Natural killer cell (primary cell): ENCODE measurements at regions of chr3 and their contacts with region 1.

Region 1: GRCh38 chr3:59957150-59957549 is 907.3 kb upstream of the CFAP20DC start:
- DNase-seq: peak in 1 of 2 donors; percentile 16
- ATAC-seq: peak; percentile 74 to 98 (median 86)
- H3K4me3 ChIP-seq: no peak overlapping the region
- H3K4me3 Mint-ChIP-seq: peak overlapping the region; percentile 71
- H3K27ac ChIP-seq: peak overlapping the region; percentile 34
- H3K27ac Mint-ChIP-seq: peak overlapping the region; percentile 79 to 82
- H3K4me1 ChIP-seq: peaks cover 9% of the 10 kb centered on the region
- H3K4me1 Mint-ChIP-seq: peaks cover 31 to 51% of the 10 kb centered on the region in 2 donors
- H3K27me3 ChIP-seq: no peaks in the 10 kb centered on the region
- H3K27me3 Mint-ChIP-seq: peaks cover 0 to 7% of the 10 kb centered on the region in 2 donors
- CTCF ChIP-seq: no peak

Region 2: DNA sequence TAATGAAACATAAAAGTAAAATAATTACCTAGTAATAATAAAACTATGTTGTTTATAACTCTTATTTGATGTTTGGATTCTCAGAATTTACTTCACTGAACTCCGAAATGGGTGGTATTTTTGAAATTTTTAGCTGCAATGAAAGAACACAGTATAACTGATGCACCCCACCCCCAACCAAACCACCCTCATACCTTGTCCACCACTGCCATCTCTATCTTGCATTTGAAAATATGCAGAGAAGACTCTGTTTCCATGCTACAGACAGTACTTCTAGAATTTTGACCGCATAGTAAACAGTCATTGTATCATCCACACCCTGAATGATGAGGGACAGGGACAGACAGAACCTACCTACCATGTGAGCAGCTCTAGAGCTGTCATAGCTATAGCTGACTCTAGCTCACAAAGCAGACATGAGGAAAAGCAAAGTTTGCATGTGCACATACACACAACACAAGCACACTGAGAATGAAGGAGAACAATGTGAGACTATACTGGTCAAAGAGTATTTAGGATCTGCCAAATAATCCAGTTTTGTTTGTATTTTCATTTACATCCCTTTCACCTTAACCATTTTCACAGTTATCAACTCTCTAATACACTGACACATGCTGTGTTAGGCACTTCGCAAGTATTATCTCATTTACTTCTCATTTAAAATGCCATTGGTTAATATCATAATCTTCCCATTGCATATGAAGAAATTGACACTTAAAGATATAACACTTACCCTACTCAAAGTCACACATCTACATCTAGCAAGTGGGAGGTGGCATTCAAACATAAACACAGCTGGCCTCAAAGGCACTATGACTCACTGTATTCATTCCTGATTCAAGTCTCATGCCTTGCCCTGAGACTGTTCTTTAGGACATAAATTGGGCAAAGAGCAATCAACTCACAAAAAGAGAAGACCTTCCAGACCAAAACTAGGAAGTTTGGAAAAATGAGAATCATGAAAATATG is 107.3 kb after region 1 on chr3:
- intact Hi-C with region 1: loop called (anchors 2 kb)
- DNase-seq: peak in 1 of 2 donors; percentile 39
- ATAC-seq: peak; percentile 85 to 91 (median 88)
- H3K4me3 ChIP-seq: no peak overlapping the region
- H3K4me3 Mint-ChIP-seq: peak overlapping the region; percentile 60
- H3K27ac ChIP-seq: peak overlapping the region; percentile 24
- H3K27ac Mint-ChIP-seq: peak overlapping the region; percentile 73 to 91
- H3K4me1 ChIP-seq: peaks cover 10% of the 10 kb centered on the region
- H3K4me1 Mint-ChIP-seq: peaks cover 35 to 39% of the 10 kb centered on the region in 2 donors
- H3K27me3 ChIP-seq: no peaks in the 10 kb centered on the region
- H3K27me3 Mint-ChIP-seq: no peaks in the 10 kb centered on the region
- CTCF ChIP-seq: no peak